ENCODE measurements at regions of chr11 and their contacts with region 1.

Region 1: GRCh38 chr11:87352759-87353707 is 315.3 kb downstream of the TMEM135 start:
- DNase-seq: peak; percentile 80 to 92 (median 85)
- ATAC-seq: peak; percentile 86 to 96 (median 94)
- H3K4me3 ChIP-seq: no peak overlapping the region
- H3K27ac ChIP-seq: peak overlapping the region in 4 of 12 donors; percentile 3 to 62 (median 16)
- H3K4me1 ChIP-seq: peaks cover 0 to 50% (median 18%) of the 10 kb centered on the region in 12 donors
- H3K27me3 ChIP-seq: no peaks in the 10 kb centered on the region
- CTCF ChIP-seq: peak; percentile 96 to 100 (median 99)
- POLR2A ChIP-seq: no peak

Region 2: DNA sequence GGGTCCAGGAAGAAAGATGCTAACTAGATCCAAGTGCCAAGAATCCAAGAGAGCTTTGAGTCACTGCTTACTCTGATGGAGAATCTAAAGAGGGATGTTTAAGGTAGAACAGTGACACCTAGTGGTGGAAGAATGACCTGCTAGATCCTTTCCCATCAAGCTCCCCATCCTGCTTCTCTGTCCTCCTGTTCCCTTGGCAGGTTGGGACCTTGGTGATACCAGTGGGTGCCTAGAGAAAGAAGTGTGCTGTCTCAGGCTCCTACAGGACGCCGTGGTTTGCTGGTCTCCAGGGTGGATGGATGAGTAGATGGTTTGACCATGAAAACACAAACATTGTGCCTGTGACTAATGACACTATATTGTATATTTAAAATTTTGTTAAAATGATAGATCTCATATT is 68.4 kb after region 1 on chr11:
- intact Hi-C with region 1: loop called (anchors 1 to 2 kb)
- DNase-seq: peak in 3 of 5 donors; percentile 22 to 42 (median 32)
- ATAC-seq: peak; percentile 56 to 91 (median 86)
- H3K4me3 ChIP-seq: no peak overlapping the region
- H3K27ac ChIP-seq: no peak overlapping the region
- H3K4me1 ChIP-seq: peaks cover 0 to 22% (median 9%) of the 10 kb centered on the region in 12 donors
- H3K27me3 ChIP-seq: no peaks in the 10 kb centered on the region
- CTCF ChIP-seq: peak; percentile 73 to 90 (median 85)
- POLR2A ChIP-seq: no peak

Region 3: GRCh38 chr11:87966694-87967093 is 613.7 kb after region 1 on chr11:
- intact Hi-C with region 1: no loop called
- DNase-seq: peak in 2 of 5 donors; percentile 5 to 18
- ATAC-seq: peak in 2 of 4 donors; percentile 20 to 24
- H3K4me3 ChIP-seq: no peak overlapping the region
- H3K27ac ChIP-seq: no peak overlapping the region
- H3K4me1 ChIP-seq: no peaks in the 10 kb centered on the region
- H3K27me3 ChIP-seq: no peaks in the 10 kb centered on the region
- CTCF ChIP-seq: no peak
- POLR2A ChIP-seq: no peak

Region 4: GRCh38 chr11:88337181-88337986 is 984.4 kb after region 1 on chr11 and contains the start of gene CTSC:
- intact Hi-C with region 1: loop called in 1 of 10 experiments (anchors 10 kb)
- DNase-seq: peak; percentile 92 to 96 (median 94)
- ATAC-seq: peak; percentile 94 to 99 (median 98)
- H3K4me3 ChIP-seq: peak within 1 kb of the TSS; percentile 38 to 93 (median 68)
- H3K27ac ChIP-seq: peak within 1 kb of the TSS; percentile 4 to 98 (median 76)
- H3K4me1 ChIP-seq: peaks cover 0 to 50% (median 5%) of the 10 kb centered on the region in 12 donors
- H3K27me3 ChIP-seq: no peaks in the 10 kb centered on the region
- CTCF ChIP-seq: peak in 2 of 12 donors; percentile 6 to 20
- POLR2A ChIP-seq: peak in 1 of 2 donors; percentile 42
- total RNA-seq, gene CTSC: 11.9 to 289 (median 19.2) TPM

Region 5: DNA sequence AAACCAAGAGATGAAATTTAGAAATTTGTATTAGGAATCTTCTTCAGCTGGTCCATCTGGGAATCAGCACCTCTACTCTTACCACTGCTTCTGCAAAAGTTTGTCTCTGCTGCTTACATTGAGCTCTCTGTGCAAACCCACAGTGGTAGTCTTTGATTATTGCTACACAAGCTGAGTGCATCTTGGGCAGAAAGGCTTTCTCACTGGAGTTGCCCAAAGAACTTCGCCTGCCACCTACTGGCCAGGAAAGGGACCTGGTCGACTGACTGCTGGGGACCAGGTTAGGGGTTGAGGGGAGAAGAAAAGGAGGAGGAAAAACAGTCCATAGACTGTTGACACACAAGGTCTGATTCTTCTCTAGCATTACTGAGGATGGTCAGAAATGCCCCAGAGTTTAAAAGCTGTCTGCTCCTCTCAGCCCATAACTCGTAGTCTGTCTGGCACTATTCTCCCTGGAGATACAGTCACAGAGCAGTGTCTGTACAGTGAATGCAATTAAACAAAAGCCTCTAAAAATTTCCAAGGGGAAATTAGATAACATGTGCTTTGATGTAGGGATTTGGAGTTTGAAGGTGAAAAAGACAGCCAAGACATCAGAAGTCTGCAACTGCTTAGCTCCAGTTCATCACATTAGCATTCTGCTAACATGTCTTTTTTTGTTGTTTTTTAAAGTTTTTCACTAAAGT is 1199.5 kb after region 1 on chr11:
- intact Hi-C with region 1: loop called in 5 of 10 experiments (anchors 10 kb)
- DNase-seq: peak in 2 of 5 donors; percentile 17 to 47
- ATAC-seq: peak in 1 of 4 donors; percentile 18
- H3K4me3 ChIP-seq: no peak overlapping the region
- H3K27ac ChIP-seq: no peak overlapping the region
- H3K4me1 ChIP-seq: no peaks in the 10 kb centered on the region
- H3K27me3 ChIP-seq: no peaks in the 10 kb centered on the region
- CTCF ChIP-seq: peak; percentile 15 to 56 (median 35)
- POLR2A ChIP-seq: no peak